Natural killer cell (primary cell): ENCODE measurements at regions of chr12 and their contacts with region 1.

Region 1: DNA sequence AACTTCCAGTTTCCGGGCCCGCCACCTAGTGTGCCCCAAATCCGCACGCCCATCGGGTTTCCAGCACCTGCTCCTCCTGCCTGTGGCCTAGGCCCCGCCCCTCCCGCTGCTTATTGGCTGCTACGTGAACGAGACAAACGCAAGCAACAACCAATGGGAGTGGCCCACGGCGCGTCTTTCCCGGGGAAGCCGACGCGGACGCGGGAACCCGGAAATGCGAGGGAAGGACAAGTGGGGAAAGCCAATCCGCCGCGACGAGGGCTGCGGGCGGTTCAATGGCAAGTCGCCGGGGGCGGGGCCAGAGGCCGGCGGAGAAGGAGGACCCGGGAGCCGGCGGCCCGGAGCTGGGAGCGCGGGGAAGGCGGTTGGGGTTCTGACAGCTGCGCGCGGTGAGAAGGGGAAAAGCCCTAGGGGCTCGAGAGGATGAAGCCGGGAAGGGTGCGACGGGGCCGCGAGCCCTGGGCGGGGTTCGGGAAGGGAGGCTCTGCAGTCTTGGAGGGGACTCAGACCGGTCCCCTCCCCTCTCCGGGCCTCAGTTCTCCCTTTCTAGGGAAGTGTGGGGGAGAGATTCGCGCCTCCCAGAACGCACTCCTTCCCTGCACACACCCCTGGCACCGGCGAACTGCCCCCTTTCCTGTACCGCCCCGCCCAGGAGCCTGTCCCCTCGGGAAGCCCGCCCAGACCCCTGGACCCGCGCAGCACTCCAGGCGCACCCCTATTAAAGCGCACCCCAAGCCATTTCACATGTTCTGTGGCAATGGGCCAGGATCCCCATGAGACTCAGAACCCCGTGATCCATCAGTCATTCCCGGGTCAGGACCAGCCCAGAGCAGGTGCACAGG is at the start of gene FICD:
- DNase-seq: peak; percentile 96 to 99
- ATAC-seq: peak; percentile 94 to 97 (median 94)
- H3K4me3 ChIP-seq: peak within 1 kb of the TSS; percentile 75
- H3K4me3 Mint-ChIP-seq: peak within 1 kb of the TSS; percentile 93
- H3K27ac ChIP-seq: peak within 1 kb of the TSS; percentile 69
- H3K27ac Mint-ChIP-seq: peak within 1 kb of the TSS; percentile 85 to 95
- H3K4me1 ChIP-seq: peaks cover 29% of the 10 kb centered on the region
- H3K4me1 Mint-ChIP-seq: peaks cover 40 to 42% of the 10 kb centered on the region in 2 donors
- H3K27me3 ChIP-seq: no peaks in the 10 kb centered on the region
- H3K27me3 Mint-ChIP-seq: no peaks in the 10 kb centered on the region
- CTCF ChIP-seq: no peak
- total RNA-seq, gene FICD: 3.9 to 7.5 (median 6.6) TPM

Region 2: GRCh38 chr12:107760809-107761501 is 754.2 kb before region 1 on chr12 and contains the start of gene PRDM4:
- intact Hi-C with region 1: loop called (anchors 2 kb)
- DNase-seq: peak; percentile 92 to 97
- ATAC-seq: peak; percentile 90 to 99 (median 92)
- H3K4me3 ChIP-seq: peak within 1 kb of the TSS; percentile 72
- H3K4me3 Mint-ChIP-seq: peak within 1 kb of the TSS; percentile 89
- H3K27ac ChIP-seq: peak within 1 kb of the TSS; percentile 78
- H3K27ac Mint-ChIP-seq: peak within 1 kb of the TSS; percentile 86 to 90
- H3K4me1 ChIP-seq: peaks cover 15% of the 10 kb centered on the region
- H3K4me1 Mint-ChIP-seq: peaks cover 29 to 32% of the 10 kb centered on the region in 2 donors
- H3K27me3 ChIP-seq: no peaks in the 10 kb centered on the region
- H3K27me3 Mint-ChIP-seq: peaks cover 0 to 6% of the 10 kb centered on the region in 2 donors
- CTCF ChIP-seq: no peak
- total RNA-seq, gene PRDM4: 37.0 to 49.5 (median 40.5) TPM

Region 3: DNA sequence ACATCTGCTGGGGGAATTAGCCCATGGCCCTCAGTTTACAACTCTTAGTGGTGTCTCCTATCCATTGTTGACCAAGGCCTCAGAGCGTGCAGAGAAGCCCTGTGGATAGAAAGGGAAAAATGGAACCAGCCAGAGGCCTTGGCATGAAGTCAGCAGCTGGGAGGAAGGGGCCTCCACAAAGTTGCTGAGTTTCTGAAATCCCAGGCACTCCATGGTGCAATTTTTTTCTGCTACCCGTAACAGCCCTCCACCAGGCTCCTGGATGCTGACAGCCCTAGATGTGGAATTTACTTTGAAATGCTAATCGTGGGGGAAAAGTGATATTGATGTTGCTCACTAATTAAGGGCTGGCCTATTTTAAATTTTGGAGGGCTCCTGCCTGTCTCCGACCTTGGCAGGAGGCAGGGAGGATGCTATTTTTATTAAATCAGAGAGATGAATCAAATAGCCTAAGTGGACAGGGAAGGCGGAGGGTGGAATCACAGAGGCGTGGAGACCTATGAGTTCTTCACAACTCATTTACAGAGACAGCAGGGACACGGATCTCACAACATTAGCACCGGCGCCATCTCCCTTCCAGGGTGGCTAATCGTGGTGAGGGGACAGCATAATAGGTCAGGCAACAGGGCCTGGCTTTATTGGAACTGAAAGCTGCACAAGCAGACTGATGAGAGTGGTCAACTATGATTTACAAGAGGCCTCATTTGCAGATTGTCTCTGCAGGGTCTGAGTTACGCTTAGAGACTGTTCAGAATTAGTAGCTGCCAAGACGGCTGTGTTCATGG is 486.0 kb before region 1 on chr12:
- intact Hi-C with region 1: no loop called
- DNase-seq: no peak
- ATAC-seq: no peak
- H3K4me3 ChIP-seq: no peak overlapping the region
- H3K4me3 Mint-ChIP-seq: no peak overlapping the region
- H3K27ac ChIP-seq: no peak overlapping the region
- H3K27ac Mint-ChIP-seq: no peak overlapping the region
- H3K4me1 ChIP-seq: no peaks in the 10 kb centered on the region
- H3K4me1 Mint-ChIP-seq: no peaks in the 10 kb centered on the region
- H3K27me3 ChIP-seq: peaks cover 3% of the 10 kb centered on the region
- H3K27me3 Mint-ChIP-seq: peaks cover 24 to 39% of the 10 kb centered on the region in 2 donors
- CTCF ChIP-seq: no peak

Region 4: GRCh38 chr12:108099073-108099472 is 416.1 kb before region 1 on chr12:
- intact Hi-C with region 1: loop called (anchors 1 kb)
- DNase-seq: peak in 1 of 2 donors; percentile 17
- ATAC-seq: peak in 2 of 3 donors; percentile 44 to 49
- H3K4me3 ChIP-seq: no peak overlapping the region
- H3K4me3 Mint-ChIP-seq: no peak overlapping the region
- H3K27ac ChIP-seq: no peak overlapping the region
- H3K27ac Mint-ChIP-seq: no peak overlapping the region
- H3K4me1 ChIP-seq: no peaks in the 10 kb centered on the region
- H3K4me1 Mint-ChIP-seq: no peaks in the 10 kb centered on the region
- H3K27me3 ChIP-seq: no peaks in the 10 kb centered on the region
- H3K27me3 Mint-ChIP-seq: peaks cover 10 to 12% of the 10 kb centered on the region in 2 donors
- CTCF ChIP-seq: peak; percentile 39

Region 5: GRCh38 chr12:108234158-108234557 is 281.0 kb before region 1 on chr12:
- intact Hi-C with region 1: loop called (anchors 1 kb)
- DNase-seq: peak; percentile 20 to 22
- ATAC-seq: peak; percentile 66 to 94 (median 88)
- H3K4me3 ChIP-seq: no peak overlapping the region
- H3K4me3 Mint-ChIP-seq: no peak overlapping the region
- H3K27ac ChIP-seq: no peak overlapping the region
- H3K27ac Mint-ChIP-seq: no peak overlapping the region
- H3K4me1 ChIP-seq: peaks cover 1% of the 10 kb centered on the region
- H3K4me1 Mint-ChIP-seq: peaks cover 7 to 11% of the 10 kb centered on the region in 2 donors
- H3K27me3 ChIP-seq: no peaks in the 10 kb centered on the region
- H3K27me3 Mint-ChIP-seq: peaks cover 10% of the 10 kb centered on the region in 2 donors
- CTCF ChIP-seq: peak; percentile 56

Region 6: DNA sequence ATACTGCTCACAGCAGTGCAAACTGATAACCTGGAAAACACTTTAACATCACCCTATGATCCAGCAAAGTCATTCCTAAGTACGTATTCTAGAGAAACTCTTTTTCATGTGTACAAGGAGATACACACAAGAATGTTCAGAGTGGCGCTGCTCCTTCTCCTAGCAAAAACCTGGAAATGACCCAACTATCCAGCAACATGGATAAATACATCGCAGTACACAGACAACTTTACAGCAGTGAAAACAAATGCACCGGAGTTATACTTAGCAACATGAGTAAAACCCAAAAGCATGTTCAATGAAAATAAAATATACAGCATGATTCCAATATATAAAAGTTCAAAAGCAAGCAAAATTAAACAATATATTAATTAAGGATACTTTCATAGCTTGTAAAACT is 27.1 kb after region 1 on chr12:
- intact Hi-C with region 1: no loop called
- DNase-seq: no peak
- ATAC-seq: no peak
- H3K4me3 ChIP-seq: no peak overlapping the region
- H3K4me3 Mint-ChIP-seq: no peak overlapping the region
- H3K27ac ChIP-seq: no peak overlapping the region
- H3K27ac Mint-ChIP-seq: peak overlapping the region in 1 of 2 donors; percentile 48
- H3K4me1 ChIP-seq: no peaks in the 10 kb centered on the region
- H3K4me1 Mint-ChIP-seq: peaks cover 19 to 26% of the 10 kb centered on the region in 2 donors
- H3K27me3 ChIP-seq: no peaks in the 10 kb centered on the region
- H3K27me3 Mint-ChIP-seq: no peaks in the 10 kb centered on the region
- CTCF ChIP-seq: no peak